Activated CD8-positive, alpha-beta T cell treated with anti-CD3 and anti-CD28 coated beads for 36 hours (primary cell): ENCODE measurements at regions of chr2 and their contacts with region 1.

Region 1: GRCh38 chr2:157492189-157492773 is 48.4 kb upstream of the CYTIP start:
- DNase-seq: peak; percentile 85
- ATAC-seq: peak; percentile 86
- H3K4me3 Mint-ChIP-seq: no peak overlapping the region
- H3K27ac Mint-ChIP-seq: no peak overlapping the region
- H3K4me1 Mint-ChIP-seq: peaks cover 65% of the 10 kb centered on the region
- H3K27me3 Mint-ChIP-seq: no peaks in the 10 kb centered on the region
- CTCF ChIP-seq: peak; percentile 82

Region 2: GRCh38 chr2:157052685-157053224 is 439.5 kb before region 1 on chr2:
- CTCF ChIA-PET with region 1: no interaction called
- POLR2A ChIA-PET with region 1: no interaction called
- intact Hi-C with region 1: no loop called
- DNase-seq: no peak
- ATAC-seq: no peak
- H3K4me3 Mint-ChIP-seq: no peak overlapping the region
- H3K27ac Mint-ChIP-seq: no peak overlapping the region
- H3K4me1 Mint-ChIP-seq: no peaks in the 10 kb centered on the region
- H3K27me3 Mint-ChIP-seq: no peaks in the 10 kb centered on the region
- CTCF ChIP-seq: no peak

Region 3: GRCh38 chr2:157443795-157444640 is 48.3 kb before region 1 on chr2 and contains the start of gene CYTIP:
- CTCF ChIA-PET with region 1: interaction called, 12 read pairs
- POLR2A ChIA-PET with region 1: interaction called, 1,592 read pairs
- intact Hi-C with region 1: no loop called
- DNase-seq: peak; percentile 82
- ATAC-seq: peak; percentile 43
- H3K4me3 Mint-ChIP-seq: peak within 1 kb of the TSS; percentile 90
- H3K27ac Mint-ChIP-seq: peak within 1 kb of the TSS; percentile 94
- H3K4me1 Mint-ChIP-seq: peaks cover 35% of the 10 kb centered on the region
- H3K27me3 Mint-ChIP-seq: no peaks in the 10 kb centered on the region
- CTCF ChIP-seq: no peak
- total RNA-seq, gene CYTIP: 514 to 520 TPM

Region 4: GRCh38 chr2:157468931-157469708 is 23.2 kb before region 1 on chr2:
- CTCF ChIA-PET with region 1: interaction called, 10 read pairs
- POLR2A ChIA-PET with region 1: interaction called, 11 read pairs
- intact Hi-C with region 1: no loop called
- DNase-seq: no peak
- ATAC-seq: peak; percentile 73
- H3K4me3 Mint-ChIP-seq: peak overlapping the region; percentile 77
- H3K27ac Mint-ChIP-seq: peak overlapping the region; percentile 99
- H3K4me1 Mint-ChIP-seq: peaks cover 93% of the 10 kb centered on the region
- H3K27me3 Mint-ChIP-seq: no peaks in the 10 kb centered on the region
- CTCF ChIP-seq: no peak

Region 5: GRCh38 chr2:157596992-157597681 is 104.9 kb after region 1 on chr2:
- CTCF ChIA-PET with region 1: interaction called, 33 read pairs
- POLR2A ChIA-PET with region 1: interaction called, 3 read pairs
- intact Hi-C with region 1: loop called (anchors 5 kb)
- DNase-seq: peak; percentile 71
- ATAC-seq: peak; percentile 90
- H3K4me3 Mint-ChIP-seq: peak overlapping the region; percentile 55
- H3K27ac Mint-ChIP-seq: no peak overlapping the region
- H3K4me1 Mint-ChIP-seq: peaks cover 10% of the 10 kb centered on the region
- H3K27me3 Mint-ChIP-seq: peaks cover 11% of the 10 kb centered on the region
- CTCF ChIP-seq: peak; percentile 71

Region 6: GRCh38 chr2:157727693-157728092 is 235.4 kb after region 1 on chr2:
- CTCF ChIA-PET with region 1: no interaction called
- POLR2A ChIA-PET with region 1: no interaction called
- intact Hi-C with region 1: no loop called
- DNase-seq: no peak
- ATAC-seq: no peak
- H3K4me3 Mint-ChIP-seq: no peak overlapping the region
- H3K27ac Mint-ChIP-seq: no peak overlapping the region
- H3K4me1 Mint-ChIP-seq: no peaks in the 10 kb centered on the region
- H3K27me3 Mint-ChIP-seq: no peaks in the 10 kb centered on the region
- CTCF ChIP-seq: no peak

Region 7: DNA sequence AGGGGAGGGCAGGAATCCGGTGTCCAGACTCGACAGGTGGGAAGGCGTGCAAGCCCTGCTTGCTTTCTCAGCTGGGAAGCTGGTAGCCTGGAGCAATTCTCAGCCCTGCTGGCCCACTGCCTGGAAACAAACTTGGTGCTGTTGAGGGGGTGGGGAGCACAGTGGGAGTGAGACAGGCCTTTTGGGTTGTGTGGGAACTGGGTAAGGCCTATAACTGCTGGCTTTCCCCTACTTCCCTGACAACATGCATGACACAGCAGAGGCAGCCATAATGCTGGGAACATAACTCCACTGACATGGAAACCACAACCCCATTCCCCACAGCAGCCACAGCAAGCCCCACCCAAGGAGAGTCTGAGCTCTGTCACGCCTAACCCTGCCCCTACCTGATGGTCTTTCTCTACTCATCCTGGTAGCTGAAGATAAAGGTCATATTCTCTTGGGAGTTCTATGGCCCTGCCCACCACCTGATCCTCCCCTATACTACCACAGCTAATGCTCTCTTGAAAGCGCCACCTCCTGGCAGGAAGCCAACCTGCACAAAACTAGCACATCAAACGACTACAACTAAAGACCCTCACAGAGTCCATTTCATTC is 259.3 kb after region 1 on chr2:
- CTCF ChIA-PET with region 1: interaction called, 13 read pairs
- POLR2A ChIA-PET with region 1: no interaction called
- intact Hi-C with region 1: loop called (anchors 10 kb)
- DNase-seq: peak; percentile 65
- ATAC-seq: peak; percentile 74
- H3K4me3 Mint-ChIP-seq: no peak overlapping the region
- H3K27ac Mint-ChIP-seq: no peak overlapping the region
- H3K4me1 Mint-ChIP-seq: peaks cover 22% of the 10 kb centered on the region
- H3K27me3 Mint-ChIP-seq: no peaks in the 10 kb centered on the region
- CTCF ChIP-seq: peak; percentile 50